Activated CD4-positive, alpha-beta T cell treated with anti-CD3 and anti-CD28 coated beads, Interleukin-2, amount 10 ng/mL, durations not matched to agents 24 days and 14 days (primary cell): ENCODE measurements at regions of chr7 and their contacts with region 1.

Region 1: DNA sequence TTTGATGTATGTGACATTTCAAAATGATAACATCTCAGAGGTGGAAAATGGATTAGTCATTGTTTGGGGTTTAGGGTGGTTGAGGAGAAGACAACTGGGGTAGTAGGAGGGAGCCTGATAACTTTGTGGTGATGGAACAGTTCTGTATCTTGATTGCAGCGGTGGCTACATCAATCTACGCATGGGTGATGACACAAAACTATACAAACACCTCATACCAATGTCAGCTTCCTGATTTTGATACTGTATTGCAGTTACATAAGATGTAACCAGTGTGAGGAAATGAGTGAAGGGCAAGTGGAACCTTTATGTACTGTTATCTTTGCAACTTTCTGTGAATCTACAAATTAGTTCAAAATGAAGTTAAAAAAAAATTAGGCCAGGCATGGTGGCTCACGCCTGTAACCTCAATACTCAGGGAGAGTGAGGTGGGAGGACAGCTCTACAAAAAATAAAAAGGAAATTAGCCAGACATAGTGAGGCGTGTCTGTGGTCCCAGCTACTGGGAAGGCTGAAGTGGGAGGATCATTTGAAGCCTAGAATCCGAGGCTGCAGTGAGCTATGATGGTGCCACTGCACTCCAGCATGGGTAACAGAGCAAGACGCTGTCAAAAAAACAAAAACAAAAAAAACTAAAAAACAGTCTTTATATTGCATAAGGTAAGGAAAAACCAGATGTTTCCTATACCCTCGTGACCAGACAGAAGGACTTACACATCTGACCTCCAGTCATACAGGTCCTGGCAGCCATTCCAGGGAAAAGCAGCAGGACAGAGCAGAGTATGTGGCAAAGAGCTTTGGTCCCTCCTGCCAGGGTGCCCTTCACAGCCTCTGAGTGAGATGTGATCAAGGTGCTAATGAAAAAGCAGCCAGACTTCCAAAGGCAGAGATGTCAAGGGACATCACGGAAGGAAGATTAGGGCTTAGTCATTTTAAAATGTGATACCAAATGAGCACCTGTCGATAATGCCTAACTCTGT is 50.8 kb downstream of the CYTH3 start:
- DNase-seq: peak; percentile 67
- H3K4me3 Mint-ChIP-seq: peak overlapping the region; percentile 9
- H3K27ac Mint-ChIP-seq: peak overlapping the region; percentile 49
- H3K4me1 Mint-ChIP-seq: peaks cover 11% of the 10 kb centered on the region
- H3K27me3 Mint-ChIP-seq: peaks cover 44% of the 10 kb centered on the region

Region 2: DNA sequence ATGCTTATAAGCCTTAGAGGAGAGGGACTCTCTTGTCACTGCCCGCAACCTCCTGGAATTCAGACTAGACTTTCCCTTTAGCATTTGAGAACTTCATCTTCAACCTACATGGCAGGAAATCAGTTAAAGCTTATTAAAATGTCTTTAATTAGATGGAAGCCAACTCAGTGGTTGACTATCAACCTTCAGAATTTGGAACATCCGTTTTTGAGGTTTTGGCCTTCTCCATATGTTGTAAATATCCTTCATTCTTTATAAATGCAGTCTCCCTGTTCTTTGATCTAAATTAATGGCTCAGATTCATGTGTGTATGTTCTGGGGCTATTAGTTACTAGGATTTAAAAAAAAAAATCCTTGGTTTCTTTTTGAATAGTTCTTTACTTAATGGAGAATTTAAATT is 105.4 kb before region 1 on chr7:
- intact Hi-C with region 1: no loop called
- DNase-seq: no peak
- H3K4me3 Mint-ChIP-seq: no peak overlapping the region
- H3K27ac Mint-ChIP-seq: no peak overlapping the region
- H3K4me1 Mint-ChIP-seq: peaks cover 23% of the 10 kb centered on the region
- H3K27me3 Mint-ChIP-seq: no peaks in the 10 kb centered on the region

Region 3: DNA sequence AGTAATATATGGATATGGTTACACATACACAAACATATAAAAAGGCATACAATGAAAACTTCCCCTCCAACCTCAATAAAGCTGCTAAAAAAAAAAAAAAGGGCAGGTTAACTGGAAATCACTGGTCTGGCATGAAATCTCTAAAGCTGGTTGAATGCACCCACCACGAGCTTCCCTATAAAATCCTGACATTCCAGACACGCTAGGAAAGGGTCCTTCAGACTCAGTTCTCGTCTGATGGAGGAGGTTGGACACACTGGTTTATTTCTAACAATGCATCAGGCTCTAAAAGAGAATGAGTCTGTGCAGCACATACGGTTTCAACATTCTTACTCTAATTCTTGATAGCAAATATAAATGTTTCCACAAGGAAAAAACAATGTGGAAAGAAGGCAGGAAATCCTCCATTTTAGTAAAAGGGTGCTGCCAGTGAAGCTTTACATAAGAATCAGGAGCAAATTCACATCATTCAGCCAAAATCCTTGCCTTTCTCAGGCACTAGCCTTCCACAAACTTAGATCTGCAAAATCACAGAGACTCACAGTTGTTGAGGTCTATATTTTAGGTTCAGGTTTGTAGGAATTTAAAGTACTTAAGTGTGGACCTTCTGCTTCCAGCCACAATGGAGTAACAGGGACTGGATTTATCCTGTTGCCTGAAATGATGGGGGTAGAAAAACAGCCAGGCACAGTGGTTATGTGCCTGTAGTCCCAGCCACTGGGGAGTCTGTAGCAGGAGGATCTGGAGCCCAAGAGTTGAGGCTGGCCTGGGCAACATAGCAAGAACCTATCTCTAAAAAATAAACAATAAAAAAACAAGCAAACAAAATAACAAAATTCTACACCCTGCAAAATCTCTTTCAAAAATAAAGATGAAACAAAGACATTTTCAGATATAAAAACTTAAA is 22.7 kb before region 1 on chr7:
- intact Hi-C with region 1: loop called (anchors 1 kb)
- DNase-seq: no peak
- H3K4me3 Mint-ChIP-seq: no peak overlapping the region
- H3K27ac Mint-ChIP-seq: no peak overlapping the region
- H3K4me1 Mint-ChIP-seq: no peaks in the 10 kb centered on the region
- H3K27me3 Mint-ChIP-seq: peaks cover 22% of the 10 kb centered on the region

Region 4: DNA sequence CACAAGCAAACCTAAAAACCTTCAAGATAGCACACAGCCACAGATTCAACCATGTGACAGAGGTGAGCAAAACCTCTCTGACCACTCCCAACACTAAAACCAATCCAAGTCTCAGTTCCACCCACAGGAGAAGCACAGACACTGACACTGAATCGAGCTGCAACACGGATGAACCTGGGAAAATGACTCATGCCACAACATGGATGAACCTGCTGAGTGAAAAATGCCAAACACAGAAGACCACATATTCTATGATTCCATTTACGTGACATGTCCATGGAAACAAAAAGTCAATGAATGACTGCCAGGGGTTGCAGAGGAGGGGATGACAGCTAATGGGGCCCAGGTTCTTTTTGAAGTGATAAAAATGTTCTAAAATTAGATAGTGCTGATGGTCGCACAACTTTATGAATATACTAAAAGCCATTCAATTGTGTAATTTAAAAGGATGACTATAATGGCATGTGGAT is 28.8 kb after region 1 on chr7:
- intact Hi-C with region 1: loop called (anchors 1 kb)
- DNase-seq: no peak
- H3K4me3 Mint-ChIP-seq: no peak overlapping the region
- H3K27ac Mint-ChIP-seq: no peak overlapping the region
- H3K4me1 Mint-ChIP-seq: peaks cover 4% of the 10 kb centered on the region
- H3K27me3 Mint-ChIP-seq: peaks cover 68% of the 10 kb centered on the region

Region 5: DNA sequence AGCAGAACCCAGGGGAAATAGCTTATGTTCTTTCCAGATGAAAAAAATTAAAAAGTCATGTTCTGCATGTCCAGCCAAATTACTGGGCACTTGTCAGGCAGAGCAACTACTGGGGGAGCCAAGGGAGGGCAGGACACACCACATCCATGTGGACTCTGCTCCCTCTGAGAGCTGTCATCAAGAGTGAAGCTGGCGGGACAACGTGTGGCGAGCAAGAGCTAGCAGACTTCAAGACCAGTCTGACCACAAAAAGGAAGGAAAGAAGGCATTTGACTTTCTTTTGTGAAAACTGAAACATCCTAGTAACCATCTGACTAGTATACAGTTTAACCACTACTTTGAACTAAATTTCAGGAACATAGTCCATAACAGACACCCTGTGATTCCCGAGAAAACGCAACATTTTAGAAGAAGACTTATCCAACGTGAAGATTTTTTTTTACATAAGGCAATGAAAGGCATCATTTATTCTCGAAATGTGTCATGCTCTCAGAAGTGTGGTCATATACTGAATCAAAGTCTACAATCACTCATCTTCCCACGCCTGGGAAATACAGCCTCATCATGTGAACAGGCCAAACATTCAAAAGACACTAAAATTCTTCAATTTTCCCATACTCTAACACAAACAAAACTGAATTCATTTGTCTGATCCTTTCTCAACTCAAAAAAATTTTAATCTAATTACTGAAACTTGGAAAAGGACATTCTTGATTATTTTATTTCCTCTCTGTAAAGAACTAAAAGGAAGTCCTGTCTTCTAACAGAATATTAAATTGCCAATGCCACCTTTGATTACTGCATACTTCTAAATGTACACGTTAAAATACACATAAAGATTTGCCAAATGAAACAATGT is 35.3 kb after region 1 on chr7:
- intact Hi-C with region 1: loop called (anchors 1 kb)
- DNase-seq: no peak
- H3K4me3 Mint-ChIP-seq: no peak overlapping the region
- H3K27ac Mint-ChIP-seq: peak overlapping the region; percentile 10
- H3K4me1 Mint-ChIP-seq: peaks cover 18% of the 10 kb centered on the region
- H3K27me3 Mint-ChIP-seq: peaks cover 65% of the 10 kb centered on the region